GM12878 (cell line): ENCODE measurements at regions of chr5 and their contacts with region 1.

Region 1: GRCh38 chr5:142145106-142145900 is 36.7 kb downstream of the NDFIP1 start:
- DNase-seq: peak; percentile 11
- ATAC-seq: peak; percentile 96
- H3K4me3 ChIP-seq: no peak overlapping the region
- H3K27ac ChIP-seq: no peak overlapping the region
- H3K4me1 ChIP-seq: no peaks in the 10 kb centered on the region
- H3K27me3 ChIP-seq: no peaks in the 10 kb centered on the region
- CTCF ChIP-seq: peak; percentile 66 to 79 (median 70)
- EP300 ChIP-seq: no peak
- POLR2A ChIP-seq: no peak
- RAD21 ChIP-seq: peak; percentile 54

Region 2: GRCh38 chr5:141650851-141651727 is 494.2 kb before region 1 on chr5 and contains the start of gene FCHSD1:
- CTCF ChIA-PET with region 1: no interaction called
- POLR2A ChIA-PET with region 1: interaction called, 11 read pairs
- RAD21 ChIA-PET with region 1: no interaction called
- SMC1A ChIA-PET with region 1: no interaction called
- in situ Hi-C with region 1: no loop called
- intact Hi-C with region 1: no loop called
- DNase-seq: no peak
- ATAC-seq: peak; percentile 99
- H3K4me3 ChIP-seq: peak within 1 kb of the TSS; percentile 85
- H3K27ac ChIP-seq: peak within 1 kb of the TSS; percentile 51
- H3K4me1 ChIP-seq: peaks cover 8% of the 10 kb centered on the region
- H3K27me3 ChIP-seq: no peaks in the 10 kb centered on the region
- CTCF ChIP-seq: no peak
- EP300 ChIP-seq: no peak
- POLR2A ChIP-seq: peak; percentile 80
- RAD21 ChIP-seq: no peak
- polyA plus RNA-seq, gene FCHSD1: 0.97 to 1.0 TPM

Region 3: DNA sequence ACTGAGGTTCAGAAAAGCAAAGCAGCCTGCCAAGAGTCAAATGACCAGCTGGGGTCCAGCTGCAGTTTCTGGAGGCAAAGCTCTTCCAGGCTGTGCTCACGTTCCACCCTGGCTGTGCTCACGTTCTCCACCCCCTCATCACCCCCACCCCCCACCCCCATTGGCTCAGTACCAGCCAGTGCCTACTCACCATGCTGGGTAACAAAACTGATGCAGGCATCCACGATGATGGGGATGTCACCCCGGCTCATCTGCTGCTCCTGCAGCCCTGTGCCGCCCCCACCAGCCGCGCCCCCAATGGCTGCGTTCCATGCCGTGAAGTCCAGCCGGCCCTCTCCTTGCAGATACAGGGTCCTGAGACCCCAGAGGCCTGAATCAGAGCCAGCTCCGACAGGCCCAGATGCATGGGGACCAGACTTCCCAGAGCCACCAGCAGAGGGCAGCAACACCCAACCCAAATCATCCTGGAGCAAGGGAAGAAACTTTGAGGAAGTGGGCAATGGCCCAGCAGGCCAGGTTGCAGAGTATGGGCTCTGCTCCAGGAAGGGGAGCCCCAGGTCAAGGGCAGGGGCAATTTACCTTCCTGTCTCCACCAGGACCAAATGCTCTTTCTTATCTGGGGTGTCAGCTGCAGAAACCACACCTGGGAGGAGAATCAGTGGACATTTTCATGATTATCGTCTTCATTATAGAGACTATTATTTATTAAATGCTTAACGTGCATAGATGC is 480.4 kb before region 1 on chr5:
- CTCF ChIA-PET with region 1: interaction called, 4 read pairs
- POLR2A ChIA-PET with region 1: no interaction called
- RAD21 ChIA-PET with region 1: interaction called, 5 read pairs
- SMC1A ChIA-PET with region 1: no interaction called
- in situ Hi-C with region 1: no loop called
- intact Hi-C with region 1: loop called (anchors 2 kb)
- DNase-seq: peak; percentile 31
- ATAC-seq: peak; percentile 100
- H3K4me3 ChIP-seq: no peak overlapping the region
- H3K27ac ChIP-seq: no peak overlapping the region
- H3K4me1 ChIP-seq: no peaks in the 10 kb centered on the region
- H3K27me3 ChIP-seq: no peaks in the 10 kb centered on the region
- CTCF ChIP-seq: peak; percentile 92 to 96 (median 94)
- EP300 ChIP-seq: no peak
- POLR2A ChIP-seq: no peak
- RAD21 ChIP-seq: peak; percentile 84

Region 4: GRCh38 chr5:141898448-141899049 is 246.8 kb before region 1 on chr5:
- CTCF ChIA-PET with region 1: no interaction called
- POLR2A ChIA-PET with region 1: no interaction called
- RAD21 ChIA-PET with region 1: no interaction called
- SMC1A ChIA-PET with region 1: no interaction called
- in situ Hi-C with region 1: no loop called
- intact Hi-C with region 1: no loop called
- DNase-seq: no peak
- ATAC-seq: no peak
- H3K4me3 ChIP-seq: no peak overlapping the region
- H3K27ac ChIP-seq: no peak overlapping the region
- H3K4me1 ChIP-seq: no peaks in the 10 kb centered on the region
- H3K27me3 ChIP-seq: no peaks in the 10 kb centered on the region; a peak in 1 of 4 replicates
- CTCF ChIP-seq: no peak
- EP300 ChIP-seq: no peak
- POLR2A ChIP-seq: no peak
- RAD21 ChIP-seq: no peak

Region 5: DNA sequence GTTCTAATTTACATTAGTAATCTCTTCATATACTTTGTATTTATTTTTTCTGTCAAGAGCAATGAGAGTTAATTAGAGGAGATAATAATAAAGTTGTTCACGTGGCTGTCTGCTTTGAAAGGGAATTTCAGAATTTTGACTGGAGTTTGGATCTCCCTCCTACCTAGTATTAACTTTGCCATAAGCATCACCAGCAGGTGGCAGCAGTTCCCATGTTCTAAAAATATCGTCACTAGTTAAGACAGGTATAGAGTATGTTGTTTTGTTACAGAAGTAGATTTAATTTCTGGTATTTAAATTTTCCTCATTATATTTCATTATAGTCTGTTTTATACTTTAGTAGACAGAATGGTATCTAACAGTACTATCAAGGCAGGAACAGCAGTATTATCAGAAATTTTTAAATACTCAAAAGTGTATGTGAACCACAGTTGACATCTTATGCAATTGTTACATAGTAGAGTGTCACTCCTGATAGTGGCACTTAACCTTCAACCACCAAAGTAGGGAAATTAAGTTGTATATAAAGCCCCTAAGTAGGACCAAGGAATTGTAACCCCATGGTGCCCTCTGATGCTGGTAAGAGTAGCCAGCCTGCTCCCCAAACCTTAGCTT is 152.8 kb before region 1 on chr5:
- CTCF ChIA-PET with region 1: interaction called, 110 read pairs
- POLR2A ChIA-PET with region 1: no interaction called
- RAD21 ChIA-PET with region 1: interaction called, 24 read pairs
- SMC1A ChIA-PET with region 1: interaction called, 32 read pairs
- in situ Hi-C with region 1: loop called (anchors 5 kb)
- intact Hi-C with region 1: loop called (anchors 1 kb)
- DNase-seq: no peak
- ATAC-seq: peak; percentile 83
- H3K4me3 ChIP-seq: no peak overlapping the region
- H3K27ac ChIP-seq: no peak overlapping the region
- H3K4me1 ChIP-seq: no peaks in the 10 kb centered on the region
- H3K27me3 ChIP-seq: no peaks in the 10 kb centered on the region
- CTCF ChIP-seq: peak; percentile 60 to 71 (median 64)
- EP300 ChIP-seq: no peak
- POLR2A ChIP-seq: no peak
- RAD21 ChIP-seq: peak; percentile 64

Region 6: GRCh38 chr5:142204219-142204618 is 58.9 kb after region 1 on chr5:
- CTCF ChIA-PET with region 1: no interaction called
- POLR2A ChIA-PET with region 1: no interaction called
- RAD21 ChIA-PET with region 1: no interaction called
- SMC1A ChIA-PET with region 1: no interaction called
- in situ Hi-C with region 1: no loop called
- intact Hi-C with region 1: no loop called
- DNase-seq: no peak
- ATAC-seq: no peak
- H3K4me3 ChIP-seq: no peak overlapping the region
- H3K27ac ChIP-seq: no peak overlapping the region
- H3K4me1 ChIP-seq: no peaks in the 10 kb centered on the region
- H3K27me3 ChIP-seq: peaks cover 0 to 1% of the 10 kb centered on the region in 2 experiments; a peak in 2 of 4 replicates
- CTCF ChIP-seq: no peak
- EP300 ChIP-seq: no peak
- POLR2A ChIP-seq: no peak
- RAD21 ChIP-seq: no peak

Region 7: GRCh38 chr5:142375944-142376411 is 230.7 kb after region 1 on chr5:
- CTCF ChIA-PET with region 1: no interaction called
- POLR2A ChIA-PET with region 1: no interaction called
- RAD21 ChIA-PET with region 1: no interaction called
- SMC1A ChIA-PET with region 1: no interaction called
- in situ Hi-C with region 1: no loop called
- intact Hi-C with region 1: no loop called
- DNase-seq: no peak
- ATAC-seq: no peak
- H3K4me3 ChIP-seq: no peak overlapping the region
- H3K27ac ChIP-seq: no peak overlapping the region
- H3K4me1 ChIP-seq: peaks cover 6% of the 10 kb centered on the region
- H3K27me3 ChIP-seq: no peaks in the 10 kb centered on the region
- CTCF ChIP-seq: no peak
- EP300 ChIP-seq: no peak
- POLR2A ChIP-seq: no peak
- RAD21 ChIP-seq: no peak